ENCODE measurements at regions of chr5 and their contacts with region 1.

Region 1: DNA sequence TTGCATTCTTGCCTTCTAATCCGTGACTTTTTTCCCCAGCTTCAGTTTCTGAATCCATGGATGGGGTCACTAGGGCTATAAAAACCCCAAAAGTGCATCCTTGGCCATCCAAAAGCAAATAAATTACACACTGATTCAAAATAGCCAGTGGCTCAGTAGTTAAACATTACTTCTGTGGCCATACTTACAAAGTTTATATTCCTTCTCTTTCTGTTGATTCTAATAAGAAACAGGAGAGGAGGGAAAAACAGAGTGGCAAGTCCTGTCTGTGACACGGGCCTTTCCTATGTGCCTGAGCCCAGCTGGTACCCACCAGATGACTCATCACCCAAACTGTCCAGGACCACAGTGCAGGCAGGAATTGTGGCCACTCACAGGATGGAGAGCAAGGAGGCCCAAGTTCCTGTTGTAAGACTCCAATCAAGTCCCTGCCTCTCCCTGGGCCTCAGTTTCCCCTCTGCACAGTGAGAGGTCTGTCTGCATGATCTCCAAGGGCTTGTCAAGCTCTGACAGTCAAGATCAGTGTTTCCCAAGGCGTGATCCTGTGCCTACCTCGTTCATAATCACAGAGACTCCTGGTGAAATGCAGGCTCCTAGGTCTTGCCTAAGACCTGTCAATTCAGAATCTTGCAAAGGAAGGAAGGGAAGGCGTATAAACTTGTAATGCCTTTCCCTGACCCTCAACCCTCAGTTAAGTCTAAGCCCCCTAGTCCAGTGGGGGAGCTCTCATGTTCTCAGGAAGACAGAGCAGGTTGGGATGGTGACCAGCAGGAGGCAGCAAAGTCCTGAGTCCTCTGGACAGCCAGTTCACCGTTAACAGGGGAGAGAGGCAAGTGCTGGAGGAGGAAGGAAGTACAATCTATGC is 29.5 kb downstream of the TNIP1 start:
- DNase-seq: peak; percentile 86
- H3K4me3 ChIP-seq: no peak overlapping the region; a peak in 1 of 4 replicates
- H3K27ac ChIP-seq: no peak overlapping the region
- H3K4me1 ChIP-seq: no peaks in the 10 kb centered on the region
- H3K27me3 ChIP-seq: no peaks in the 10 kb centered on the region
- CTCF ChIP-seq: peak; percentile 92
- EP300 ChIP-seq: no peak
- RAD21 ChIP-seq: peak; percentile 93

Region 2: GRCh38 chr5:150758531-150759333 is 292.6 kb before region 1 on chr5 and contains the start of gene DCTN4:
- CTCF ChIA-PET with region 1: no interaction called
- POLR2A ChIA-PET with region 1: no interaction called
- DNase-seq: peak; percentile 87
- H3K4me3 ChIP-seq: peak within 1 kb of the TSS; percentile 85 to 91
- H3K27ac ChIP-seq: peak within 1 kb of the TSS; percentile 95 to 98
- H3K4me1 ChIP-seq: peaks cover 6 to 25% of the 10 kb centered on the region in 2 experiments; a peak in 3 of 4 replicates
- H3K27me3 ChIP-seq: no peaks in the 10 kb centered on the region
- CTCF ChIP-seq: no peak
- EP300 ChIP-seq: no peak
- RAD21 ChIP-seq: no peak
- polyA plus RNA-seq, gene DCTN4: 22.8 and 30.5 TPM in 2 replicates

Region 3: GRCh38 chr5:150960791-150961396 is 90.4 kb before region 1 on chr5:
- CTCF ChIA-PET with region 1: no interaction called
- POLR2A ChIA-PET with region 1: no interaction called
- DNase-seq: no peak
- H3K4me3 ChIP-seq: no peak overlapping the region
- H3K27ac ChIP-seq: no peak overlapping the region
- H3K4me1 ChIP-seq: no peaks in the 10 kb centered on the region
- H3K27me3 ChIP-seq: no peaks in the 10 kb centered on the region
- CTCF ChIP-seq: no peak
- EP300 ChIP-seq: no peak
- RAD21 ChIP-seq: no peak

Region 4: DNA sequence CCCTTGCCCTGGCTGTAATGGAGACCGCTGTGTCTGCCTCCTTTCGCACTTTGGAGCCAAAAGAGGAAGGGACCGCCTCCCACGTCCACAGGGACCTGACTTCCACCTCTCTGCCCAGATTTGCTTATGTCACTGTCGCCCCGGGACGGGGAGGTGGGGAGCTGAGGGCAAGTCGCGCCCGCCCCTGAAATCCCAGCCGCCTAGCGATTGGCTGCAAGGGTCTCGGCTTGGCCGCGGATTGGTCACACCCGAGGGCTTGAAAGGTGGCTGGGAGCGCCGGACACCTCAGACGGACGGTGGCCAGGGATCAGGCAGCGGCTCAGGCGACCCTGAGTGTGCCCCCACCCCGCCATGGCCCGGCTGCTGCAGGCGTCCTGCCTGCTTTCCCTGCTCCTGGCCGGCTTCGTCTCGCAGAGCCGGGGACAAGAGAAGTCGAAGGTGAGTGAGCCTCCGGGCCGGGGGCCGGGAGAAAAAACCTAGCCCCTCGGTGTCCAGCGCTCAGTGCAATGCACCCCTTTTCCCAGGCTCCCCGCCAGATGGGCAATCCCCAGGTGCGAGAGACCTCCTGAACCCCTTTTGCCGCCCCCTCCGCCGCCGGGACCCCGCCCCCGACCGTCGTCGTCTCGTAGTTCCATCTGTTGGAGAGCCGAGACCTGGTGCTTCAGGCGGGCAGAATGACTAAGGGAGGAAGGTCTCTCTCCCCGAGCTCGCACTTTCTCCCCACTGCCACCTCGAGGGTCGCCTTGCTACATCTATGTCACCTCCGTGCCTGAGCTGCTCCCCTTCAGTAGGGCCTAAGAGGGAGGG is 30.8 kb before region 1 on chr5 and contains the start of gene GPX3:
- CTCF ChIA-PET with region 1: interaction called, 13 read pairs
- POLR2A ChIA-PET with region 1: no interaction called
- DNase-seq: peak; percentile 92
- H3K4me3 ChIP-seq: peak within 1 kb of the TSS; percentile 61 to 64
- H3K27ac ChIP-seq: peak within 1 kb of the TSS in 1 of 2 experiments; percentile 16; a peak in 1 of 4 replicates
- H3K4me1 ChIP-seq: peaks cover 0 to 8% of the 10 kb centered on the region in 2 experiments; a peak in 1 of 4 replicates
- H3K27me3 ChIP-seq: no peaks in the 10 kb centered on the region
- CTCF ChIP-seq: no peak
- EP300 ChIP-seq: no peak
- RAD21 ChIP-seq: no peak
- polyA plus RNA-seq, gene GPX3: 3.2 and 3.8 TPM in 2 replicates

Region 5: DNA sequence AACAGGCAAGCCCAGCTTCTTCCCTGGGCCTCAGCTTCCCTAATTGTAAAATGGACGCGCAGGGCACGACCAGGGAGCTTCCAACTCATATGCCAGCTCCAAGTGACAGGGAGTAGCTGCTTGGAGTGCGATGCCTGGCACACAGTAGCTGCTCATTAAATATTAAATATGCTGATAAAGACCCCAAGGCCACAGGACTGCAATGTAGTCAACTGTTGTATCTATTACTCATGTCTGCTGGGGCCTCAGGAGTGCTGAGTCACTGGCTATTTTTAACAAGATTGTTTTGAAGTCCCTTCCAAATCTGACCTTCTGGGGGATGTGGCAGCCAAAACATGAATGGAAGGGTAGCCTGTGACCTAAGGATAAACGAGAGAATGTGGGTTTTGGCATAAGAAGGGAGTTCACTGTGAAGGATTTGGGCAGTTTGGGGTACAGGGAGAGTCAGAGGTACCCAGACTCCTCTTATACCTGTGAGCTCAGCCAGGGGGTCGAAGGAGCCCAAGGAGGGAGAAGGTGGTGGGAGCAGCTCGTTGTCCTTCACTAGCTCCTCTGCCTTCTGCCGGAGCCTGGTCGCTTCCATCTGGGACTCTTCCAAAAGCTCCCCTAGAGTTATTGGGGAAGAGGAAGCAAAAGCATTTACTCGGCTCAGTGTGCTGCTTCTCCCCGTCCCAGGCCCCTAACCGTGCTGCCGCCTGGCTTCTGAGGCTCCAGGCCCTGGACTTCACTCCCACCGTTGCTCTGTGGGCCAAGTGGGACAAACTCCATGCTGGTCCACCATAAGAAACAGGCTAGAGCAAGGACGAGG is 12.0 kb after region 1 on chr5:
- CTCF ChIA-PET with region 1: interaction called, 22 read pairs
- POLR2A ChIA-PET with region 1: no interaction called
- DNase-seq: no peak
- H3K4me3 ChIP-seq: no peak overlapping the region
- H3K27ac ChIP-seq: peak overlapping the region in 1 of 2 experiments; percentile 71; a peak in 3 of 4 replicates
- H3K4me1 ChIP-seq: peaks cover 10 to 16% of the 10 kb centered on the region in 2 experiments; a peak in 3 of 4 replicates
- H3K27me3 ChIP-seq: no peaks in the 10 kb centered on the region
- CTCF ChIP-seq: no peak
- EP300 ChIP-seq: peak in 1 of 2 experiments; percentile 39; a peak in 1 of 4 replicates
- RAD21 ChIP-seq: no peak

Region 6: DNA sequence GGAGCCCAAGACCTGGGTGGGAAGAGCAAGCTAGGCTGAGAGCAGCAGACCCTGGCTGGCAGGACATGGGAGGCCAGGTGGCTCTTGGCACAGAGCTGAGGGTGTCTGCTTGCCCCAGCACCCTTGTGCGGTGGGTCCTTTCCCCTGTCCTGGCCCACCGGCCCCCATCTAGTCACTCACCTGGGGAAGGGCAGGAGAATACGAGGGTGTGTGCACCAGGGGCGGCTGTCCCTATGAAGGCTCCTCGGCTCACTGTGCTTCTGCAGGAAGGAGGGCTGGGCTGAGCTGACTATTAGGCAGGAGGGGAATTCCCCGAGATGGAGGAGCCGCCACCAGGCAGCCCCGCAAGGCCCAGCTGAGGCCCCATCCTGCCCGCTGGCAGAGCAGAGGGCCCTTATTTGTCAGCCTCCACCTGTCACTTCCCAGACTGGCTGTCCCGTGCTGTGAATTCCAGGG is 35.6 kb after region 1 on chr5:
- CTCF ChIA-PET with region 1: interaction called, 22 read pairs
- POLR2A ChIA-PET with region 1: no interaction called
- DNase-seq: no peak
- H3K4me3 ChIP-seq: no peak overlapping the region
- H3K27ac ChIP-seq: no peak overlapping the region
- H3K4me1 ChIP-seq: peaks cover 4% of the 10 kb centered on the region in 2 experiments; a peak in 3 of 4 replicates
- H3K27me3 ChIP-seq: no peaks in the 10 kb centered on the region
- CTCF ChIP-seq: no peak
- EP300 ChIP-seq: no peak
- RAD21 ChIP-seq: no peak

Region 7: DNA sequence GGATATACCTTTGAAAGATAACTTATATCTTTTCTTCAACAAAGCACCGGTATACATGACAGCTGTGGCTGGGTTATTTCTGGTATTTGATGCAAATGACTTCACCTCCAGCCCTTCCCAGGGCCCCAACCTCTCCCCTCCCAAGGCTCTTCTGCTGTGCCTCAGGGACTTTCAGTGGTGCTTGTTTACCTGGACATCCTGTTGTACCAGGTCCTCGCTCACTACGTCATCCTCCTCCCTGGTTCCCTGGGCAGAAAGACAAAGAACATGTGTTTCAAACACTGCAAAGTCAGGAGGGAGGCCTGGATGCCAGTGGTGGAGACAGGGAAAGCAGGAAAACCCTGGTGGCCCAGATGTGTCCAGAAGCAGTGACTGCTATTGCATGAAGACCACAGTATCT is 82.9 kb after region 1 on chr5:
- CTCF ChIA-PET with region 1: interaction called, 10 read pairs
- POLR2A ChIA-PET with region 1: no interaction called
- DNase-seq: no peak
- H3K4me3 ChIP-seq: no peak overlapping the region
- H3K27ac ChIP-seq: no peak overlapping the region
- H3K4me1 ChIP-seq: no peaks in the 10 kb centered on the region
- H3K27me3 ChIP-seq: no peaks in the 10 kb centered on the region
- CTCF ChIP-seq: no peak
- EP300 ChIP-seq: no peak
- RAD21 ChIP-seq: no peak

Measured in SK-N-SH (cell line).